Keratinocyte (primary cell): ENCODE measurements at regions of chr12 and their contacts with region 1.

Region 1: DNA sequence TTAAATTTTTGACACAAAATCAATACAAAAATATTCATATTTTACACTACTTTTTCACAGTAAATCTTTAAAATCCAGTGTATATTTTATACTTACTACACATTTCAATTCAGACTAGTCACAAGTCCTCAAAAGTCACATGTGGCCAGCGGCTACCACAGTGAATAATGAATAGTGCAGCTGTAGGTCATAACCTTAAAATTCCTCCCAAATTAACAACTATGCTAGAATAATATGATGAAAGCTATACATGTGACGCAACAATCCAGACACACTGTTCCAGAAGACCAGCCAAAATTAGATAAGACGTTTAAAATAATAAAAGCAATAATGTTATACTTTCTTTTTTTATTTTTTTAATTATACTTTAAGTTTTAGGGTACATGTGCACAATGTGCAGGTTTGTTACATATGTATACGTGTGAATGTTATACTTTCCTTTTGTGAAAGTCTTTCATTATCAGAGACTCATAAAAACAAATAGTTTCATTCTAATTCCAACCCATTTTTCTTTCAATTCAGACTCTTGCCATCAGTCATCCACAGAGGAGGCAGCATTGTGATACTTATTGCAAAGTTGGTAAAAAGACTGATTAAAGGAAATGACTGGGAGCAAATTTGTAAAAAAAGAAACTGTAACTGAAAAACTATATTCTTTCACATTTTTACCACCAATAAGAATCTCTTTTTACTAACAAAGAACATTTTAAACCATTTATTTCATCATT is 67.0 kb downstream of the C2CD5 start:
- DNase-seq: no peak
- H3K4me3 ChIP-seq: no peak overlapping the region
- H3K27ac ChIP-seq: no peak overlapping the region
- H3K4me1 ChIP-seq: no peaks in the 10 kb centered on the region
- H3K27me3 ChIP-seq: no peaks in the 10 kb centered on the region
- CTCF ChIP-seq: no peak

Region 2: DNA sequence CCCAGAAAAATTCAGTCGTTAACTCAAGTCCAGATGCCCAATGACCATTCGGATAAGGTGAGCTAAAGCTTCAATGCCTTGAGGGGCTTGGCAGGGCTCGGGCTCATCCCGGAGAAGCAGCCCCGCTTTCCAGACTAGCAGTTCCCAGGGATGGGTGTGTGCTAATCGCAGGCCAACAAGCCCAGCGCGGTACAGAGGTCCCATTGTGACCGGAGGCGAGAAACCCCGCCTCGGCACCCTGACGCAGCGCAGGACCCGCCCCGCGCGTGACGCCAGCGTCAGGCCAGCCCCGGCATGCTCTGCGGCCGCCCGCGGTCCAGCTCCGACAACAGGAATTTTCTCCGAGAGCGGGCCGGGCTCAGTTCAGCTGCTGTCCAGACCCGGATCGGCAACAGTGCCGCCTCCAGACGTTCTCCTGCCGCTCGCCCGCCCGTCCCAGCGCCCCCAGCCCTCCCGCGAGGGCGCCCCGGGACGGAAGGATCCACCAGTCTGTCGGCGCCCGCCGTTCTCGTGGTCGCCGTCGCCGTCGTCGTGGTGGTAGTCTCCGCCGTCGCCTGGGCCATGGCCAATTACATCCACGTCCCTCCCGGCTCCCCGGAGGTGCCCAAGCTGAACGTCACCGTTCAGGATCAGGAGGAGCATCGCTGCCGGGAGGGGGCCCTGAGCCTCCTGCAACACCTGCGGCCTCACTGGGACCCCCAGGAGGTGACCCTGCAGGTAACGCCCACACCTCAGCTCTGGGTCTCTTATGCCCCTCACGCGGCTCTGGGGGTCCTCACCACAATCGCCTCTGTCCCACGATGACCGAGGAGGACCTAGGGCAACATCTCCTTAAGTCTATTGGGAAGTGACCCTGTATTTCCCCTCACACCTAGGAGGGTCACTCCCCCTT is 147.8 kb after region 1 on chr12 and contains the start of gene ETNK1:
- dilution Hi-C with region 1: loop called (anchors 25 kb)
- DNase-seq: peak; percentile 71
- H3K4me3 ChIP-seq: peak within 1 kb of the TSS; percentile 74 to 91 (median 77)
- H3K27ac ChIP-seq: peak within 1 kb of the TSS; percentile 85
- H3K4me1 ChIP-seq: peaks cover 13% of the 10 kb centered on the region
- H3K27me3 ChIP-seq: no peaks in the 10 kb centered on the region
- CTCF ChIP-seq: no peak
- polyA plus RNA-seq, gene ETNK1: 12.0 to 20.3 TPM (median 14.0 TPM) in 3 replicates